GM12878 (cell line): ENCODE measurements at regions of chr4 and their contacts with region 1.

Region 1: DNA sequence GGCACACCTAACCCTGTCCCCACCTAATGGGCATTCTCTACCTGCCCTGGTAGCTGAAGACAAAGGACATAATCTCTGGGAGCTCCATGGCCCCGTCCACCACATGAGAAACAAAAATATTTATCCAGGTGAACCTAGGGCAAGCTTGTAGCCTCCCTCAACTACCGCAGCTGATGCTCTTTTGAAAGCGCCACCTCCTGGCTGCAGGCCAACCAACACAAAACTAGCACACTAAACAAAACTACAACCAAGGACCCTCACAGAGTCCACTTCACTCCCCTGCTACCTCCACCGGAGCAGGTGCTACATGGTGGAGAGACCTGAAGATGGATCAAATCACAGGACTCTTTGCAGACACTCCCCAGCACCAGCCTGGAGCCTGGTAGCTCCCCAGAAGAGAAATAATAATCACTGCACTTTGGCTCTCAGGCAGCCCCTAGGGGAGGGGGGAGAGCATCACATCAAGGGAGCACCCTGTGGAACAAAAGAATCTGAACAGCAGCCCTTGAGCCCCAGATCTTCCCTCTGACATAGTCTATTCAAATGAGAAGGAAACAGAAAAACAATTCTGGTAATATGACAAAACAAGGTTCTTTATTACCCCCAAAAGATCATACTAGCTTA is 111.3 kb upstream of the ATP8A1 start:
- DNase-seq: no peak
- ATAC-seq: peak; percentile 79
- H3K4me3 ChIP-seq: no peak overlapping the region
- H3K27ac ChIP-seq: no peak overlapping the region
- H3K4me1 ChIP-seq: no peaks in the 10 kb centered on the region
- H3K27me3 ChIP-seq: no peaks in the 10 kb centered on the region; a peak in 1 of 4 replicates
- CTCF ChIP-seq: peak in 2 of 3 experiments; percentile 16 to 28; a peak in 2 of 6 replicates
- EP300 ChIP-seq: no peak
- POLR2A ChIP-seq: no peak
- RAD21 ChIP-seq: 0 out of 2 replicates have a peak, but pooled peaks have one; percentile 39

Region 2: DNA sequence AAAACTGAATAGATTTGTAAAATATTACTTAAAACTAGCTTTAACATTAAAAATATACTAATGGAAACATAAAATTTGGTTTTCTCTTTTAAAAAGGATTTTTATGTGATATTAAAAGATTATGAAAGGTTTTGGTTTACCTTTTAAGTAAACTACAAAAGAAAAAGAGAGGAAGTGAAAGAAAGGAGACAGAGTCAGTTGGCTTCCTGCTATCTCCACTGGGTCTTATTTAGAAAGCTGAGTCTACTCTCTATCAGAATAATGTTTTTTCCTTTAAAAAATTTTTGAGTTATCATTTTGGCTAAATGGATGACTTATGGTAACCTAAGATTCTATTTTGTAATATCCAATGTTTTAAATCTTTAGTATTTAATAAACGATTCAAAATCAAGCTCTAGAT is 89.7 kb before region 1 on chr4:
- CTCF ChIA-PET with region 1: interaction called, 10 read pairs
- POLR2A ChIA-PET with region 1: no interaction called
- RAD21 ChIA-PET with region 1: no interaction called
- SMC1A ChIA-PET with region 1: interaction called, 4 read pairs
- in situ Hi-C with region 1: no loop called
- intact Hi-C with region 1: no loop called
- DNase-seq: no peak
- ATAC-seq: peak; percentile 62
- H3K4me3 ChIP-seq: no peak overlapping the region
- H3K27ac ChIP-seq: no peak overlapping the region
- H3K4me1 ChIP-seq: peaks cover 6% of the 10 kb centered on the region; the same call in 1 of the 2 replicates
- H3K27me3 ChIP-seq: no peaks in the 10 kb centered on the region
- CTCF ChIP-seq: no peak
- EP300 ChIP-seq: no peak
- POLR2A ChIP-seq: no peak
- RAD21 ChIP-seq: no peak

Region 3: DNA sequence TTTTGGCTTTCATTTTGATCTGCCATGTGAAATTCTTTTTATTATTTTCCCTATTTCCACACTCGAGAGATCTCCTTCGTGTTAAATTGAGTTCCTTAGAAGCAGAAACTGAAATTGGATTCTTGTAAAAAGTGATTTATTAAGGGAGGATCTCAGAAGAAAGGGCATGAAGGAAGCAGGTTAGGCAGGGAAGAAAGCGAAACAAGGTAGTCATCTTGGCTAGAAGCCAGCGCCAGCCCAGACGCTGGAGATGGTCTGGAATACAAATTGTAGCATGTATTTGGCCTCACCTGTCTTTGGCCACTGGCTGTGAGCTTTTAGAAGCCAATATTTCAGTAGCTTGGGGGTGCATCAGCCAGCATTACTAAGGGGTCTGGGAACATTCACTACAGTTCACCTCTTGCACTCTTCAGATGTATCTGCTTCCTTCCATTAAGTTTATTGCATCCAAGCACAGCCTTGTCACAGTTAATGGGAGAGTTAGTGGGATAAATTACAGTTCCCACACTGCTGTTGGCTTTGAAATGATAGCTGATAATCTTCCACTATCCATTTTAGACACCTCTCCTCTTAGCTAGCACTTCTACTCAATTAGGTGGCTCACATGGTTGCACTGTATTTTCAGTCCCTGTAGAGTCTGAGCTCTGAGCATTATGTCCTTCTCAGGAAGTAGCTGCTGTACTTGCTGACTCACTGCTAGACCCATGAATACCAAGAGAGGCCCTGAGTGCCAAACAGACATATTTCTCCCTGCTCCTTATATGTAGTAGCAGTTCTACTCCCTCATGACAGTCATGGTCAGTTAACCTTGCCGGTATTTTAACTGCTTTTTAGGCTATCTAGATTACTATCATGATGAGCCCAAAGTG is 138.9 kb after region 1 on chr4:
- CTCF ChIA-PET with region 1: no interaction called
- POLR2A ChIA-PET with region 1: no interaction called
- RAD21 ChIA-PET with region 1: no interaction called
- SMC1A ChIA-PET with region 1: no interaction called
- in situ Hi-C with region 1: no loop called
- intact Hi-C with region 1: no loop called
- DNase-seq: no peak
- ATAC-seq: no peak
- H3K4me3 ChIP-seq: no peak overlapping the region
- H3K27ac ChIP-seq: no peak overlapping the region
- H3K4me1 ChIP-seq: no peaks in the 10 kb centered on the region
- H3K27me3 ChIP-seq: no peaks in the 10 kb centered on the region; a peak in 2 of 4 replicates
- CTCF ChIP-seq: no peak
- EP300 ChIP-seq: no peak
- POLR2A ChIP-seq: no peak
- RAD21 ChIP-seq: no peak